RWPE1 (cell line): ENCODE measurements at regions of chr5 and their contacts with region 1.

Region 1: GRCh38 chr5:32329308-32329834 is 16.6 kb upstream of the MTMR12 start:
- DNase-seq: peak; percentile 57
- H3K27ac ChIP-seq: no peak overlapping the region
- CTCF ChIP-seq: peak; percentile 68

Region 2: DNA sequence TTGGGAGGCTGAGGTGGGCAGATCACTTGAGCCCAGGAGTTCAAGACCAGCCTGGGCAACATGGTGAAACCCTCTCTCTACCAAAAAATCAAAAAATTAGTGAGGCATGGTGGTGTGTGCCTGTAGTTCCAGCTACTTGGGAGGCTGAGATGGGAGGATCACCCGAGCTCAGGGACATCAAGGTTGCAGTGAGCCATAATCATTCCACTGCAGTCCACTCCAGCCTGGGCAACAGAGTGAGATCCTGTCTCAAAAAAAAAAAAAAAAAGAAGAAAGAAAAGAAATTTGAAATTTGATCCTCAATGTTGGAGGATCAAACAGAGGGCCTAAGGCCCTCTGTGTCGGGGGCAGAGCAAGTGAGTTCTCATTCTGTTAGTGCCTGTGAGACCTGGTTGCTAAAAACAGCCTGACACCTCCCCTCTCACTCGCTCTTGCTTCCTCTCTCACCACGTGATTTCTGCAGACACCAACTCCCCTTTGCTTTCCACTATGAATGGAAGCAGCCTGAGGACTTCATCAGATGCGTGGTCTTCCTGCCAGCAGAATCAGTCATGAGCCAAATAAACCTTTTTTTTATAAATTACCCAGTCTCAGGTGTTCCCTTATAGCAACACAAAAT is 146.8 kb before region 1 on chr5:
- CTCF ChIA-PET with region 1: no interaction called
- POLR2A ChIA-PET with region 1: no interaction called
- DNase-seq: no peak
- H3K27ac ChIP-seq: no peak overlapping the region
- CTCF ChIP-seq: no peak

Region 3: GRCh38 chr5:32232441-32233219 is 96.7 kb before region 1 on chr5:
- CTCF ChIA-PET with region 1: interaction called, 20 read pairs
- POLR2A ChIA-PET with region 1: no interaction called
- DNase-seq: peak; percentile 53
- H3K27ac ChIP-seq: no peak overlapping the region
- CTCF ChIP-seq: peak; percentile 84